Activated CD4-positive, alpha-beta T cell treated with anti-CD3 and anti-CD28 coated beads, Interleukin-2, amount 10 ng/mL, durations not matched to agents 24 days and 14 days (primary cell): ENCODE measurements at regions of chrX and their contacts with region 1.

Region 1: DNA sequence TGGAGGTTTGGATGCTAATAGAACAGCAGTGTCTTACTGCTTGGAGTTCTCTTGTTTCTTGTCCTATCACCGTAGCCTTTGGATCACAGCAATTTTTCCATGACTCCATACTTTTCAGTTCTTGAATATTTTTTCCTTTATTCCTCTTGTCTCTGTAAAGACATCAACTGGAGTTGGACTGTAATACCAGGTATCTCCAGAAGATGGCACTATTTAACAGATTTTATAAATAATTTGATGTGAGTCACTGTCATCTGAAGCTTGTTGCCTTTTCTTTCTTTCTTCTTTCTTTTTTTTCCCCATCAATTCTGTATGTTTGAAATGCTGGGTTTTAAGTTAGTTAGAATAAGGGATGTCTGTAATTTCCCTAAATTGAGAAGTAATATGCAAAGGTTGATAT is 24.1 kb downstream of the HPRT1 start:
- DNase-seq: peak; percentile 57
- H3K4me3 Mint-ChIP-seq: no peak overlapping the region
- H3K27ac Mint-ChIP-seq: no peak overlapping the region
- H3K4me1 Mint-ChIP-seq: no peaks in the 10 kb centered on the region
- H3K27me3 Mint-ChIP-seq: no peaks in the 10 kb centered on the region

Region 2: GRCh38 chrX:133859860-133860259 is 624.2 kb before region 1 on chrX:
- intact Hi-C with region 1: no loop called
- DNase-seq: no peak
- H3K4me3 Mint-ChIP-seq: no peak overlapping the region
- H3K27ac Mint-ChIP-seq: no peak overlapping the region
- H3K4me1 Mint-ChIP-seq: no peaks in the 10 kb centered on the region
- H3K27me3 Mint-ChIP-seq: no peaks in the 10 kb centered on the region

Region 3: DNA sequence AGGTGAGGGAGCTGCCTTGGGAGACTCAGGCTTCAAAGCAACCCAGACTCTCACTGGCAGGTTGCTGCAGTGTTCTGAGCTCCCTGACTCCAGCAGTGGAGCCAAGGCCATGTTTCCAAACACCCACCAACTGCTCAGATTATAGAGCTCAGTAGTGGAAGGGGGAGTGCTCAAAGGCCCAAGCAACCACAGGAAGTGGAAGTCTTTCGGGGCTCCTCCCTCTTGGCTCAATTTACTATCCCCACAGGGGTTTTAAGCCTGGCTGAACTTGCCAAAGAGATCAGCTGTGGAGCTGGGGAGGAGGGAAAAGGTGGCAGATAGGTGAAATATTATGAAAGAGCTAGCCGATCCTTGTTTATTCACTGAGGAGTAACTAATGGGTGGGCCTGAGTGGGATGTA is 58.4 kb after region 1 on chrX:
- intact Hi-C with region 1: no loop called
- DNase-seq: peak; percentile 59
- H3K4me3 Mint-ChIP-seq: no peak overlapping the region
- H3K27ac Mint-ChIP-seq: no peak overlapping the region
- H3K4me1 Mint-ChIP-seq: peaks cover 9% of the 10 kb centered on the region
- H3K27me3 Mint-ChIP-seq: peaks cover 1% of the 10 kb centered on the region

Region 4: DNA sequence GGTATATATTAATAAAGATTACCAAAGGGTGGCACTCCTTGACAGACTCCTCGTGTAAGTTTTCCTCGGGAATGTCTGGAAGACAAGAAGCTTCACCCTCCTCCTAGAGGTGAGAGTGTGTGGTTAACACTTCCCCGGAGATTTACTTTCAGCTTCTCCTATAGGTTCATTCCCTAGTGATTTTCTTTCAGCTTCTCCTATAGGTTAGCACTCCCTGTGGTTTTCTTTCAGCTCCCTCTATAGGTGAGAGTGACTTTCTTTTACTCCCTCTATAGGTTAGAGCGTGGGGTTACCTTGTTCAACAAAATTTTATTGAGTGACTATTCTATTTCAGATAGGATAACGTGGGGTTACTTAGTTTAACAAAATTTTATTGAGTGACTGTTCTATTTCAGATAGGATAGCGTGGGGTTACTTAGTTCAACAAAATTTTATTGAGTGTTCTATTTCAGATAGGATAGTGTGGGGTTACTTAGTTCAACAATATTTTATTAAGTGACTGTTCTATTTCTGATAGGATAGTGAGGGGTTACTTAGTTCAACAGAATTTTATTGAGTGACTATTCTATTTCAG is 280.3 kb after region 1 on chrX:
- intact Hi-C with region 1: loop called (anchors 5 kb)
- DNase-seq: peak; percentile 57
- H3K4me3 Mint-ChIP-seq: no peak overlapping the region
- H3K27ac Mint-ChIP-seq: no peak overlapping the region
- H3K4me1 Mint-ChIP-seq: peaks cover 2% of the 10 kb centered on the region
- H3K27me3 Mint-ChIP-seq: no peaks in the 10 kb centered on the region

Region 5: DNA sequence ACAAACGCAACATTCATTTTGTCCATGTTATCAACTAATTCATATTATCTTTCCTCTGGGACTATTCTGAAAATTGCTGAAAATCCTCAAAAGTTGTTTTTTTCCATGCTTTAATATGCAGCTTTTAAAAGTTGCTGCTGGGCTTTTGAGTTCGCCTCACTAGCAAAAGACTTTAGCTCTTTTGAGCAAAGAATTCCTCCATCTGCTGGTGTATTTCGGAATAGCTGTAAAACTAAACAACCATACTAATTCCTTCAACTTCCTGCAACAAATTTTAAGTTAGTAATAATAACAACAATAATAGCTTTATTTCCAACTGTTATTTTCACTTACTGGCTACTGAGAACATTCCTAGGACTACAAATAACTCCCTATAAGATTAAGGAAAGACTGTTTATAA is 298.8 kb after region 1 on chrX:
- intact Hi-C with region 1: loop called (anchors 5 kb)
- DNase-seq: no peak
- H3K4me3 Mint-ChIP-seq: no peak overlapping the region
- H3K27ac Mint-ChIP-seq: no peak overlapping the region
- H3K4me1 Mint-ChIP-seq: no peaks in the 10 kb centered on the region
- H3K27me3 Mint-ChIP-seq: no peaks in the 10 kb centered on the region